HepG2 (cell line): ENCODE measurements at regions of chr10 and their contacts with region 1.

Region 1: GRCh38 chr10:123154092-123154921 is at the start of gene BUB3:
- DNase-seq: peak; percentile 98
- ATAC-seq: peak; percentile 97
- H3K4me3 ChIP-seq: peak within 1 kb of the TSS; percentile 65 to 99 (median 98)
- H3K27ac ChIP-seq: peak within 1 kb of the TSS; percentile 88
- H3K4me1 ChIP-seq: peaks cover 50% of the 10 kb centered on the region
- H3K27me3 ChIP-seq: peaks cover 6 to 41% of the 10 kb centered on the region in 2 experiments
- CTCF ChIP-seq: 0 out of 2 replicates have a peak, but pooled peaks have one; percentile 3
- EP300 ChIP-seq: 0 out of 4 replicates have a peak, but pooled peaks of 1 of the 2 experiments have one; percentile 9
- POLR2A ChIP-seq: peak; percentile 92 to 93
- RAD21 ChIP-seq: no peak
- total RNA-seq, gene BUB3: 174 and 230 TPM in 2 replicates

Region 2: GRCh38 chr10:123139521-123140163 is 14.7 kb before region 1 on chr10:
- CTCF ChIA-PET with region 1: no interaction called
- POLR2A ChIA-PET with region 1: interaction called, 11 read pairs
- in situ Hi-C with region 1: no loop called
- intact Hi-C with region 1: no loop called
- DNase-seq: peak; percentile 93
- ATAC-seq: peak; percentile 96
- H3K4me3 ChIP-seq: peak overlapping the region; percentile 39 to 69 (median 44)
- H3K27ac ChIP-seq: no peak overlapping the region
- H3K4me1 ChIP-seq: peaks cover 60% of the 10 kb centered on the region
- H3K27me3 ChIP-seq: peaks cover 20 to 88% of the 10 kb centered on the region in 2 experiments; a peak in 4 of 5 replicates
- CTCF ChIP-seq: peak; percentile 17
- EP300 ChIP-seq: peak in 1 of 2 experiments; percentile 40; a peak in 1 of 4 replicates
- POLR2A ChIP-seq: no peak
- RAD21 ChIP-seq: no peak

Region 3: GRCh38 chr10:123203393-123204134 is 49.3 kb after region 1 on chr10:
- CTCF ChIA-PET with region 1: no interaction called
- POLR2A ChIA-PET with region 1: interaction called, 3 read pairs
- in situ Hi-C with region 1: no loop called
- intact Hi-C with region 1: loop called (anchors 10 kb)
- DNase-seq: peak; percentile 94
- ATAC-seq: peak; percentile 98
- H3K4me3 ChIP-seq: no peak overlapping the region
- H3K27ac ChIP-seq: peak overlapping the region; percentile 65
- H3K4me1 ChIP-seq: peaks cover 32% of the 10 kb centered on the region
- H3K27me3 ChIP-seq: no peaks in the 10 kb centered on the region; a peak in 1 of 5 replicates
- CTCF ChIP-seq: no peak
- EP300 ChIP-seq: peak; percentile 56 to 77; a peak in 3 of 4 replicates
- POLR2A ChIP-seq: no peak
- RAD21 ChIP-seq: no peak

Region 4: DNA sequence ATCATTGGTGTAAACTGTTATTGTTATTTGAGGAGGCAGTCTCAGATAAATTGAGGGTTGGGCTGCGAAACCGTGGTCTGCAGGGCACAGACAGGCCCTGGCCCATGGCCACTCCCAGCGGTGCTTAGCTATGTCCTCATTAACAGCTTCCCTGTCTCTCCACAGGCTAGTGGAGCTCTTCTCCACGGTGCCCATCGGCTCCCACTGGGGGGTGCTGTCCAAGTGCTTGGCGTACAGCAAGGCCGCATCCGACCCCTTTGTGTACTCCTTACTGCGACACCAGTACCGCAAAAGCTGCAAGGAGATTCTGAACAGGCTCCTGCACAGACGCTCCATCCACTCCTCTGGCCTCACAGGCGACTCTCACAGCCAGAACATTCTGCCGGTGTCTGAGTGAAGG is 533.5 kb after region 1 on chr10:
- CTCF ChIA-PET with region 1: no interaction called
- POLR2A ChIA-PET with region 1: no interaction called
- in situ Hi-C with region 1: no loop called
- intact Hi-C with region 1: no loop called
- DNase-seq: peak; percentile 6
- ATAC-seq: peak; percentile 72
- H3K4me3 ChIP-seq: no peak overlapping the region
- H3K27ac ChIP-seq: no peak overlapping the region
- H3K4me1 ChIP-seq: no peaks in the 10 kb centered on the region
- H3K27me3 ChIP-seq: peaks cover 1 to 14% of the 10 kb centered on the region in 2 experiments; a peak in 3 of 5 replicates
- CTCF ChIP-seq: peak; percentile 28
- EP300 ChIP-seq: no peak
- POLR2A ChIP-seq: no peak
- RAD21 ChIP-seq: no peak